ENCODE measurements at regions of chr19 and their contacts with region 1.

Region 1: GRCh38 chr19:39532233-39533002 is at the start of gene EID2B:
- DNase-seq: peak; percentile 96
- H3K4me3 ChIP-seq: peak within 1 kb of the TSS; percentile 70 to 89 (median 77)
- H3K27ac ChIP-seq: peak within 1 kb of the TSS; percentile 86 to 91 (median 88)
- H3K4me1 ChIP-seq: peaks cover 14 to 36% (median 29%) of the 10 kb centered on the region in 4 donors
- H3K27me3 ChIP-seq: no peaks in the 10 kb centered on the region
- CTCF ChIP-seq: peak; percentile 95 to 100 (median 99)
- EP300 ChIP-seq: no peak
- POLR2A ChIP-seq: no peak
- total RNA-seq, gene EID2B: 3.0 to 6.4 (median 6.1) TPM

Region 2: DNA sequence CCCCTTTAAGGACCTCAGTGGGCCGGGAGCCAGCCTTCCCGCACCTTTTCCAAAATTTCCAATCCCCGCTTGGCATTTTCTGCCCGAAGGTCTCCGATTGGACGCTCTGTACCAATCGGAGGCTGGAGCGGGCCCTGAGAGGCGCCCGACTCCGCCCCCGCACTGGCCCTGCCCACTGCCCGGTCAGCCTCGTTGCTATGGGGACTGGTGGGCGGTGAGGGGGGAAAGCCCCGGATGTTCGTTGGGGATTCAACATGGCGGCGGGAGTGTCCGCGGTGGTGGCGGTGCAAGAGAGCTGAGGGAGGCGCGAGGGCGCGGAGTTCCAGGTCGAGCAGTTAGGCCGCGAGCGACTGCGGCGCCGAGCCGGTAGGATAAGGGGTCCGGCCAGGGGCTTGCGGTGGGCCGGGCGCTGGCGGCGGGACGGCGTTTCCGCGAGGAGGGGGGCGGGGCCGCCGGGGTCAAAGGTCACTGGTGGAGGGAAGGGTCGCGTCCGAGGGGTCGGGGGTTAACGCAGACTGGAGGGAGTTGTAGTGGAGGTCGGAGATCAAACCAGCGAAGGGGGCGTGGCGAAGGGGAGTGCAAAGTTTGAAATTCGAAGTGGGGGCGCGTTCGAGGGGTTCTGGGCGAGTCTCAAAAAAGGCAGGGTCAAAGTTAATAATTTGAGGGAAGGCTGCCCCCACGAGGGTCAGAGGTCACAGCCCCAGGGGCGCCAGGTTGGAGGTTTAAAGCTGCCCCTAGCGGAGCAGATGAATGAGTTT is 406.7 kb before region 1 on chr19 and contains the start of gene PAK4:
- intact Hi-C with region 1: loop called (anchors 5 kb)
- DNase-seq: peak; percentile 99
- H3K4me3 ChIP-seq: peak within 1 kb of the TSS; percentile 81 to 97 (median 90)
- H3K27ac ChIP-seq: peak within 1 kb of the TSS; percentile 75 to 86 (median 82)
- H3K4me1 ChIP-seq: peaks cover 51 to 72% (median 65%) of the 10 kb centered on the region in 4 donors
- H3K27me3 ChIP-seq: peaks cover 0 to 10% (median 0%) of the 10 kb centered on the region in 4 donors
- CTCF ChIP-seq: peak in 1 of 3 experiments; percentile 18
- EP300 ChIP-seq: no peak
- POLR2A ChIP-seq: no peak
- total RNA-seq, gene PAK4: 8.3 to 18.4 (median 11.0) TPM

Region 3: DNA sequence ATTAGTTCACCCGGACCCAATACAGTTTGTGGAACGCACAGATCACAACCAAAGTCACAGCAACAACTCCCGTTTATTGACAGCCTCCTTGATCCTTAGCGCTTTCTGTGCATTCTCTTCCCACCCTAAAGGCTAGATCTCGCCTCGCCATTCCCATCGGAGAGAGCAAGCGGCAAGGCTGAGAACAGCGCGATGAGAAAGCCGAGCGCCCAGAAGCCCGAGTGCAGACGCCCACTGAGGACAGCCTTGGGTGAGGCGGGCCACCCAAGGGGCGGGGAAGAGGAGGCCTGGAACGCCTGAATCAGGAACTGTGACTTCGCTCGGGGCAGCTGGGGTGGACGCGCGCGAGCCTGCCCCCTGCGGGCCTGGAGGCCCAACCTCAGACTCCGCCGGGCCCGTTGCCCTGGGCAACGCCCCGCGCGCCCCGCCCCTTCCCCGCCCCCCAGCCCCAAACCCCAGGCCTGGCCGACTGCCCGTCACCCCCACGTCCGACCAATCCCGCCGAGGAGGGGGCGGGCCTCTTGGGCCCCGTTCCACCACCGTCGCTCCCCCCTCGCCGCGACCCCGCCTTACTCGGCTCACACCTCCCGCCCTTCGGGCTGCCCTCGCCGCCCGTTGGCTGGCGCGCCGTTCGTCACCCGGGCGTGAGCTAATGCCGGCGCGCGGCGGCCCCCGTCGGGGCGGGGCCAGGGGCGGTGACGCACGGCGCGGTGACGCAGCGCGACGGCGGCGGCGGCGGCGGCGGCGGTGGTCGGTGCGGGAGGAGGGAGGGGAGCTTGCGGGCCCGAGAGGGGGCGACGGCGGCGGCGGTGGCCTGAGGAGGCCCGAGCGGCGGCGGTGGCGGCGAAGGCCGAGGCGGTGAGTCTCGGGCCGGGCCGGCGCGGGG is 190.5 kb before region 1 on chr19 and contains the start of gene SAMD4B:
- intact Hi-C with region 1: loop called (anchors 10 kb)
- DNase-seq: peak; percentile 100
- H3K4me3 ChIP-seq: peak within 1 kb of the TSS; percentile 84 to 91 (median 88)
- H3K27ac ChIP-seq: peak within 1 kb of the TSS; percentile 88 to 93 (median 90)
- H3K4me1 ChIP-seq: peaks cover 40 to 55% (median 54%) of the 10 kb centered on the region in 4 donors
- H3K27me3 ChIP-seq: no peaks in the 10 kb centered on the region
- CTCF ChIP-seq: peak; percentile 78 to 91 (median 84)
- EP300 ChIP-seq: no peak
- POLR2A ChIP-seq: peak; percentile 79
- total RNA-seq, gene SAMD4B: 59.8 to 138 (median 104) TPM

Region 4: GRCh38 chr19:39445265-39446111 is 86.9 kb before region 1 on chr19 and contains the start of gene SUPT5H:
- intact Hi-C with region 1: loop called (anchors 5 kb)
- DNase-seq: peak; percentile 99
- H3K4me3 ChIP-seq: peak within 1 kb of the TSS; percentile 73 to 96 (median 90)
- H3K27ac ChIP-seq: peak within 1 kb of the TSS; percentile 91 to 96 (median 94)
- H3K4me1 ChIP-seq: peaks cover 43 to 63% (median 60%) of the 10 kb centered on the region in 4 donors
- H3K27me3 ChIP-seq: no peaks in the 10 kb centered on the region
- CTCF ChIP-seq: no peak
- EP300 ChIP-seq: no peak
- POLR2A ChIP-seq: peak; percentile 89
- total RNA-seq, gene SUPT5H: 87.6 to 101 (median 91.5) TPM

Region 5: GRCh38 chr19:39474139-39474622 is 58.2 kb before region 1 on chr19:
- intact Hi-C with region 1: loop called (anchors 5 kb)
- DNase-seq: no peak
- H3K4me3 ChIP-seq: no peak overlapping the region
- H3K27ac ChIP-seq: peak overlapping the region in 2 of 4 donors; percentile 8 to 19
- H3K4me1 ChIP-seq: peaks cover 0 to 3% (median 0%) of the 10 kb centered on the region in 4 donors
- H3K27me3 ChIP-seq: no peaks in the 10 kb centered on the region
- CTCF ChIP-seq: peak; percentile 49 to 80 (median 65)
- EP300 ChIP-seq: no peak
- POLR2A ChIP-seq: no peak

Measured in esophagus muscularis mucosa (tissue), 4 donors.